Mammary epithelial cell (primary cell): ENCODE measurements at regions of chr13 and their contacts with region 1.

Region 1: GRCh38 chr13:45482571-45483173 is 17.9 kb downstream of the COG3 start:
- DNase-seq: peak; percentile 80
- H3K4me3 ChIP-seq: peak overlapping the region; percentile 24 to 38 (median 36)
- H3K27ac ChIP-seq: peak overlapping the region; percentile 96
- H3K4me1 ChIP-seq: peaks cover 26% of the 10 kb centered on the region
- H3K27me3 ChIP-seq: no peaks in the 10 kb centered on the region
- CTCF ChIP-seq: no peak

Region 2: GRCh38 chr13:45464687-45465453 is 17.8 kb before region 1 on chr13 and contains the start of gene COG3:
- CTCF ChIA-PET with region 1: no interaction called
- dilution Hi-C with region 1: no loop called
- in situ Hi-C with region 1: no loop called
- intact Hi-C with region 1: loop called (anchors 2 kb)
- DNase-seq: peak; percentile 98
- H3K4me3 ChIP-seq: peak within 1 kb of the TSS; percentile 75 to 98 (median 89)
- H3K27ac ChIP-seq: peak within 1 kb of the TSS; percentile 74
- H3K4me1 ChIP-seq: peaks cover 16% of the 10 kb centered on the region
- H3K27me3 ChIP-seq: no peaks in the 10 kb centered on the region
- CTCF ChIP-seq: peak in 1 of 2 donors; percentile 42
- total RNA-seq, gene COG3: 35.7 to 39.0 TPM

Region 3: GRCh38 chr13:45500492-45501174 is 18.0 kb after region 1 on chr13:
- CTCF ChIA-PET with region 1: no interaction called
- dilution Hi-C with region 1: no loop called
- in situ Hi-C with region 1: no loop called
- intact Hi-C with region 1: loop called (anchors 2 kb)
- DNase-seq: peak; percentile 96
- H3K4me3 ChIP-seq: peak overlapping the region in 1 of 3 experiments; percentile 28
- H3K27ac ChIP-seq: peak overlapping the region; percentile 96
- H3K4me1 ChIP-seq: peaks cover 32% of the 10 kb centered on the region
- H3K27me3 ChIP-seq: no peaks in the 10 kb centered on the region
- CTCF ChIP-seq: no peak